ENCODE measurements at regions of chr7 and their contacts with region 1.

Region 1: DNA sequence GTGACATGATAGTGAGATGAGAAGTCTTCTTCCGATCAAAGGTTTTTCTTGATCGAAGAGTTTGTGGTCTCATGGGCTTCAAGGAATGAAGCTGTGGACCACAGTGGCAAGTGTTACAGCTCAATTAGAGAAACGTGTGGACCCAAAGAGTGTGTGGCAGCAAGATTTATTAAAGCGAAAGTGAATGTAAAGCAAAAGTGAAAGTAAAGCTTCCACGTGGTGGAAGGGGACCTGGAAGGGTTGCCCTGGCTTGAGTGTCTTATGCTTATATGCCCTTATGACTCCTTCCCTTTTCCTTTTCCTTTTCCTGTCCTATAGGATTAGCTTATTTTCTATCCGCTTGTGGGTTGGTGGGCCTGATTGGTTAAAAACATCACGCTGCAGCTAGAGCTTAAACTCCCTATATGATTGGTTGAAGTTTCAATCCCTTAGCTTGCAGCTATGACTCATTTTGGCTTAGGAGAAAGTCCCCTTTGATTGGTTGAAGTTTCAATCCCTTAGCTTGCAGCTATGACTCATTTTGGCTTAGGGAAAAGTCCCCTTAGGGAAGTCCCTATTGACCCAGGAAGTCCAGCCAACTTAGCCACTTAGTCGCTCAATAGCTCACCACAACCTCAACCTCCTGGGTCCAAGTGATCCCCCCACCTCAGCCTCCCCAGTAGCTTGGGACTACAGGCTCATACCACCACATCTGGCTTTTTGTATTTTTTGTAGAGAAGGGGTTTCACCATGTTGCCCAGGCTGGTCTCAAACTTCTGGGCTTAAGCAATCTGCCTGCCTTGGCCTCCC is 34.7 kb downstream of the MRPS24 start:
- DNase-seq: no peak
- H3K4me3 ChIP-seq: no peak overlapping the region
- H3K27ac ChIP-seq: no peak overlapping the region
- H3K27me3 ChIP-seq: no peaks in the 10 kb centered on the region
- CTCF ChIP-seq: no peak

Region 2: DNA sequence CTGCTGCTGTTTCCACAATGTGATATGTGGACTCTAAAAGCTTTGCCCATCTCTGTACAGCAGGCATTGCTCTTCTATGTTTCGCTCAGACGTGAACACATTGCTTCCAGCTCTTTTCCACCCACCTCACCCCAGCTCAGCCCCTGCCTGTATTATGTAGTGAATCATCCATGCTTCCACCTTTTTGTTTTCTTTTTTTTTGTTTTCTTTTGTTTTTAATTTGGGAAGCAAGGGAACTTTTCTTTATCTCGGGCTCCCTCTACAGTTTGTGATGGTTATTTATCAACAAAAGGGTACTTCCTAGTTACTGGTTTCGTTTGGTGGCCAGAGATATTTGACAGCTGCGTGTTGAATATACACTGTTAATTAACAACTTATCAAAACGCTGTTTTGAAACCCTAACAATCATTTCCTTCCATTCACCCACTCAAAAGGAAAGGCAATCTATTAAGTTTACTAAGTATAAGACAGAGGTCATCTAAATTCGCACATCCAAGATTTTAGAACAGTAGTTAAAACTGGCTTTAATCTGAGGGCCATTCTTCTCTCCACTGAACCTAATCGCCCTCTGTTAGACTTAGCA is 379.6 kb before region 1 on chr7:
- CTCF ChIA-PET with region 1: interaction called, 14 read pairs
- POLR2A ChIA-PET with region 1: no interaction called
- DNase-seq: no peak
- H3K4me3 ChIP-seq: no peak overlapping the region
- H3K27ac ChIP-seq: no peak overlapping the region
- H3K27me3 ChIP-seq: no peaks in the 10 kb centered on the region
- CTCF ChIP-seq: peak; percentile 60

Region 3: GRCh38 chr7:43721193-43721806 is 113.4 kb before region 1 on chr7:
- CTCF ChIA-PET with region 1: interaction called, 25 read pairs
- POLR2A ChIA-PET with region 1: no interaction called
- DNase-seq: no peak
- H3K4me3 ChIP-seq: no peak overlapping the region
- H3K27ac ChIP-seq: no peak overlapping the region
- H3K27me3 ChIP-seq: no peaks in the 10 kb centered on the region
- CTCF ChIP-seq: peak; percentile 64

Region 4: DNA sequence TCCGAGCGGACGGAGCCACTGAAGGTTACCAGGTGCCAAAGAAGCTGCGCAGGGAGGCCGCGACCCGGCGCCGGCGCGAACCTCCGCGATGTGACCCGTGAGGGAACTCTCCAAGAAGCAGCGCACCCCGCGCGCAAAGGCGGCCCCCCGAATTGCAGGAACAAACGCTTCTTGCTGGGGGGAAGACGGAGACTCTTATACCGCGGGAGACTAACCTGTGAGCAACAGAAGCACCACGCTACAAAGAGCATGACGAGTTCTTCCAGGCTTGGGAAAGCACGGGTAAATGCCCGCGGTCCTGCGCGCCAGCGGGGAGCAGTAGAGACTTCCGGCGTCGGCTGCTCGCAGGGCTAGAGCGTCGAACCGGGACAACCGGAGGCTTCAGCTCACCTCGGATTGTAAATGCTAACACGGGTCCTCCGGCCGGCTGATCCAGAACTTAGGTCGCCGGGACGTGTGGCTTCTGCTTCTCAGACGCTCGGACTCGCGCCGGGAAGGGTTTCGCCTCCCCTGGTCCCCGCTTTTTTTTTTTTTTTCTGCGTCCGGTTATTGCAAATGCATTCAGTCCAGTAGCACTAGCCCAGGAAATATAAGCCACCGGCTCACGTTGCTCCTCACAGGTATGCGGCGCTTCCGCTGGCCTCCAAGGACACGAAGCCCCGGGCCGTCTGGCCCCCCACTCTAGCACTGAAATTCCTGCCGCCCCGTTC is 105.3 kb before region 1 on chr7 and contains the start of gene COA1:
- CTCF ChIA-PET with region 1: interaction called, 58 read pairs
- POLR2A ChIA-PET with region 1: no interaction called
- DNase-seq: peak; percentile 82
- H3K4me3 ChIP-seq: peak within 1 kb of the TSS; percentile 89
- H3K27ac ChIP-seq: peak within 1 kb of the TSS; percentile 33
- H3K27me3 ChIP-seq: no peaks in the 10 kb centered on the region
- CTCF ChIP-seq: peak; percentile 25
- polyA plus RNA-seq, gene COA1: 22.4 and 24.4 TPM in 2 replicates

Region 5: DNA sequence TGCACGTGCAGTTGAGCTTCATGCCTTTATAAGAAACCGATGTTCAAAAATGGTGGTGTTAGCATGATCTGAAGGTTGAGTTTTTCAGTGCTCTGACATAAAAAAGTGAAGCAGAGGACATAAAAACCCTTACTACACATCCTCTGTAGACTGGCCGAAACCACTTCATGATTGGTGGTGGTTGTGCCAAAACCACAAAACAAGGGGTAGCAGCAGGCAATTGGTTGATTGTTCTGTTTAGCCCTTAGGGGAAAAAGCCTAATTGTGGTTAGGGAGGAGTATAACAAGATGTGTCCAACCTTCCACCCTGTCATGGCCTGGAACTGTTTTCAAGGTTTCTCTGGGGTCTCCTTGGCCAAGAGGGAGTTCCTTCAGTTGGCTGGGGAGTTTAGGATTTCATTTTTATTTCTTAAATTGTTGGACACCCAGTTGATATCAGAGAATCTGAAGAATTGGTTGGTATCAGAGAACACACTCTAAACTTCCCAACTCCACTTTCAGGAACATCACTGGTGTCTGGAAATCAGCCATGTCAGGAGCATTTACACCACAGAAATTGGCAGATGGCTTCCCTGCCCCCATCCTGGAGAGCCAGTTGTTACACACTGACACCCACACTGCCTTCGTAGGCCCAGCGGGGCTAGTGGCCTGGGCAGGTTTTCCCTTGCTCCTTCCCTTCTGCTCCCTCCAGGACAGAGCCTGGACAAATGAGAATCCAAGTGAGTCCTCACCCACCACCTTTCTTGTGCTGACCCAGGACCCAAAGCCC is 15.9 kb after region 1 on chr7:
- CTCF ChIA-PET with region 1: interaction called, 22 read pairs
- POLR2A ChIA-PET with region 1: no interaction called
- DNase-seq: no peak
- H3K4me3 ChIP-seq: no peak overlapping the region
- H3K27ac ChIP-seq: no peak overlapping the region
- H3K27me3 ChIP-seq: peaks cover 4% of the 10 kb centered on the region
- CTCF ChIP-seq: no peak